ENCODE measurements at regions of chr3 and their contacts with region 1.

Region 1: GRCh38 chr3:11379233-11379823 is 107.1 kb downstream of the ATG7 start:
- DNase-seq: peak in 2 of 9 experiments; percentile 51 to 61
- ATAC-seq: peak; percentile 40
- H3K4me3 ChIP-seq: no peak overlapping the region
- H3K4me3 Mint-ChIP-seq: no peak overlapping the region
- H3K27ac ChIP-seq: no peak overlapping the region
- H3K27ac Mint-ChIP-seq: no peak overlapping the region
- H3K4me1 ChIP-seq: no peaks in the 10 kb centered on the region
- H3K4me1 Mint-ChIP-seq: no peaks in the 10 kb centered on the region
- H3K27me3 ChIP-seq: no peaks in the 10 kb centered on the region
- H3K27me3 Mint-ChIP-seq: no peaks in the 10 kb centered on the region
- CTCF ChIP-seq: peak; percentile 58

Region 2: DNA sequence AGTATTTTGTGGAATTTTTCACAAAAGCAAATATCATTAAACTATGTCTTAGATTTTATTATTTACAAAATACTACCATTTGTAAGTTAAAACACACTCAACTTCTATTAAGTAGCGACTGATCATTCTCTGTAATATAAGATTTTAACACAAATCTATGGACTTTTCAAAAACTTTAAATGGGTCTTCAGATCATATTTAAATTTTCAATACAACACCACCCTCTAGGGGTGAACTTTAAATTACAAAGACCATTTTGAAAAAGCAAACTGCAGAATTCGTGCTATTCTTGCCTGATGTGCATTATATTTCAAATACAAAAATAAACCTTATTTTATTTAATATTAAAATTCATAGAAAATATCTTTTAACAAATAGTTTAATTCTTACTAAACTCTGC is 272.6 kb after region 1 on chr3:
- CTCF ChIA-PET with region 1: interaction called, 110 read pairs
- POLR2A ChIA-PET with region 1: interaction called, 5 read pairs
- intact Hi-C with region 1: loop called (anchors 1 kb)
- DNase-seq: peak in 2 of 9 experiments; percentile 56 to 67
- ATAC-seq: no peak
- H3K4me3 ChIP-seq: no peak overlapping the region
- H3K4me3 Mint-ChIP-seq: no peak overlapping the region
- H3K27ac ChIP-seq: no peak overlapping the region
- H3K27ac Mint-ChIP-seq: no peak overlapping the region
- H3K4me1 ChIP-seq: peaks cover 11% of the 10 kb centered on the region
- H3K4me1 Mint-ChIP-seq: peaks cover 13% of the 10 kb centered on the region
- H3K27me3 ChIP-seq: no peaks in the 10 kb centered on the region
- H3K27me3 Mint-ChIP-seq: no peaks in the 10 kb centered on the region
- CTCF ChIP-seq: peak; percentile 83

Region 3: GRCh38 chr3:11658180-11658579 is 278.9 kb after region 1 on chr3:
- CTCF ChIA-PET with region 1: interaction called, 110 read pairs
- POLR2A ChIA-PET with region 1: interaction called, 5 read pairs
- intact Hi-C with region 1: no loop called
- DNase-seq: no peak
- ATAC-seq: no peak
- H3K4me3 ChIP-seq: no peak overlapping the region
- H3K4me3 Mint-ChIP-seq: no peak overlapping the region
- H3K27ac ChIP-seq: no peak overlapping the region
- H3K27ac Mint-ChIP-seq: no peak overlapping the region
- H3K4me1 ChIP-seq: peaks cover 11% of the 10 kb centered on the region
- H3K4me1 Mint-ChIP-seq: peaks cover 13% of the 10 kb centered on the region
- H3K27me3 ChIP-seq: no peaks in the 10 kb centered on the region
- H3K27me3 Mint-ChIP-seq: no peaks in the 10 kb centered on the region
- CTCF ChIP-seq: no peak

Region 4: GRCh38 chr3:11720231-11720898 is 341.0 kb after region 1 on chr3:
- CTCF ChIA-PET with region 1: no interaction called
- POLR2A ChIA-PET with region 1: no interaction called
- intact Hi-C with region 1: no loop called
- DNase-seq: peak; percentile 11 to 73 (median 48)
- ATAC-seq: peak; percentile 46
- H3K4me3 ChIP-seq: peak overlapping the region; percentile 58 to 68
- H3K4me3 Mint-ChIP-seq: peak overlapping the region; percentile 86
- H3K27ac ChIP-seq: peak overlapping the region in 1 of 2 experiments; percentile 56
- H3K27ac Mint-ChIP-seq: peak overlapping the region; percentile 70
- H3K4me1 ChIP-seq: peaks cover 15% of the 10 kb centered on the region
- H3K4me1 Mint-ChIP-seq: peaks cover 26% of the 10 kb centered on the region
- H3K27me3 ChIP-seq: no peaks in the 10 kb centered on the region
- H3K27me3 Mint-ChIP-seq: peaks cover 11% of the 10 kb centered on the region
- CTCF ChIP-seq: no peak

Region 5: DNA sequence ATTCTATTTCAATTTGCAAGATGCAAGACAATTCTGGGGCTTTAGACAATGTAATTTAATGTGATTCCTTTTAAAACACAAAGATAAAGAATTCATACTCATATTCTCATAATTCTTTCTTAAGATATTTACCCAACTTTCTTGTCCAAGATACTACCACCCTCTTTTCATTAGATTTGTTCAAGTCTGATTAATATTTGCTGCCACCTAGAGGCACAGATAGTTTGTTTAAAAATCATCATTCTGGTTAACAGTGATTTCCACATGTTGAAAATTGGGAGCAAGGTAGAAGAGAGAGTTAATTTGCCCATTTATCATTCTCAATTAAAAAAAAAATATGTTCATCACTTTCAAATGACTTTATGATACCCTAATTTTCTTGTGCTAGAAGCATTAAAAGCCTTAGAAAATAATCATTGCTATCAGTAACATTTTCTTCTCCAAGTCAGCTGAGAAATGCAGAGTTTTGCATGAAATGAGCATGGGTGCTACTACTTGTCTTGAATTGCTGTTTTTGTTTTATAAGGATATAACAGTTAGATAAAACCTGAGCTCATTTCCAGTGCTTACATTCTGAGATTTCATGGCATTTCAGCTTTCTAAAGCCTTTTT is 455.8 kb after region 1 on chr3:
- CTCF ChIA-PET with region 1: no interaction called
- POLR2A ChIA-PET with region 1: no interaction called
- intact Hi-C with region 1: loop called in 1 of 2 experiments (anchors 1 kb)
- DNase-seq: peak in 1 of 9 experiments; percentile 9
- ATAC-seq: no peak
- H3K4me3 ChIP-seq: no peak overlapping the region
- H3K4me3 Mint-ChIP-seq: no peak overlapping the region
- H3K27ac ChIP-seq: no peak overlapping the region
- H3K27ac Mint-ChIP-seq: no peak overlapping the region
- H3K4me1 ChIP-seq: no peaks in the 10 kb centered on the region
- H3K4me1 Mint-ChIP-seq: no peaks in the 10 kb centered on the region
- H3K27me3 ChIP-seq: no peaks in the 10 kb centered on the region
- H3K27me3 Mint-ChIP-seq: no peaks in the 10 kb centered on the region
- CTCF ChIP-seq: no peak

Region 6: GRCh38 chr3:12175844-12176453 is 796.6 kb after region 1 on chr3:
- CTCF ChIA-PET with region 1: no interaction called
- POLR2A ChIA-PET with region 1: no interaction called
- intact Hi-C with region 1: loop called in 1 of 2 experiments (anchors 5 kb)
- DNase-seq: peak in 4 of 9 experiments; percentile 12 to 51 (median 18)
- ATAC-seq: no peak
- H3K4me3 ChIP-seq: no peak overlapping the region
- H3K4me3 Mint-ChIP-seq: no peak overlapping the region
- H3K27ac ChIP-seq: no peak overlapping the region
- H3K27ac Mint-ChIP-seq: no peak overlapping the region
- H3K4me1 ChIP-seq: no peaks in the 10 kb centered on the region
- H3K4me1 Mint-ChIP-seq: no peaks in the 10 kb centered on the region
- H3K27me3 ChIP-seq: no peaks in the 10 kb centered on the region
- H3K27me3 Mint-ChIP-seq: no peaks in the 10 kb centered on the region
- CTCF ChIP-seq: no peak

Measured in CD8-positive, alpha-beta T cell (primary cell).